Endothelial cell of umbilical vein (primary cell): ENCODE measurements at regions of chr1 and their contacts with region 1.

Region 1: DNA sequence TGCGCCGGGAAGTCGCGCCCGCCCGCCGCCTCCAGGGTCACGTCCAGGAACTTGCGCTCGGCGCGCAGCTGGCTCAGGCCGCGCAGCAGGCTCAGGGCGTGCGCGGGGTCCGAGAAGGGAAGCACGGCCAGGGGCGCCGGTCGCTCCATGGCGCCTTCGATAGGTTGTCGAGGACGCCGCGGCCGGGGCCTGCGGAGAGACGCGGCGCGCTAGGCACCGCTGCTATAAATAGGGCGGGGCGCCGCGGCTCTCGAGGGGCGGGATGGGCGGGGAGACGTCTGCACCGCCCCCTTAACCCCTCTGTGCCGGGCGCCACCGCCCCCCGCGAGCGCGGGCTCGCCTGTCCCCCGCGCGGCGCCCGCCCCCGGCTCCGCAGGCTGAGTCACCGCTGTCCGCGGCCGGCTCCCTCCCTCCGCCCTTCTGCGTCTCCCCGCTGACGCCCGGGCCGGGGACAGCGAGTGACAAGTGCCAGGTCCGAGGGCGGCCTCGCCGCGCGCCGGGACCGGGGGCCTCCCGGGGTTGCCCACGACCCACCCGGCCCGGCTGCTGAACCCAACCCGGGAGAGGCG is at the start of gene KLHL21:
- DNase-seq: peak; percentile 84
- H3K4me3 ChIP-seq: peak within 1 kb of the TSS; percentile 39 to 84 (median 74)
- H3K27ac ChIP-seq: peak within 1 kb of the TSS; percentile 86
- H3K4me1 ChIP-seq: peaks cover 23% of the 10 kb centered on the region
- H3K27me3 ChIP-seq: no peaks in the 10 kb centered on the region
- CTCF ChIP-seq: no peak
- POLR2A ChIP-seq: peak; percentile 99
- total RNA-seq, gene KLHL21: 19.2 and 22.4 TPM in 2 replicates

Region 2: DNA sequence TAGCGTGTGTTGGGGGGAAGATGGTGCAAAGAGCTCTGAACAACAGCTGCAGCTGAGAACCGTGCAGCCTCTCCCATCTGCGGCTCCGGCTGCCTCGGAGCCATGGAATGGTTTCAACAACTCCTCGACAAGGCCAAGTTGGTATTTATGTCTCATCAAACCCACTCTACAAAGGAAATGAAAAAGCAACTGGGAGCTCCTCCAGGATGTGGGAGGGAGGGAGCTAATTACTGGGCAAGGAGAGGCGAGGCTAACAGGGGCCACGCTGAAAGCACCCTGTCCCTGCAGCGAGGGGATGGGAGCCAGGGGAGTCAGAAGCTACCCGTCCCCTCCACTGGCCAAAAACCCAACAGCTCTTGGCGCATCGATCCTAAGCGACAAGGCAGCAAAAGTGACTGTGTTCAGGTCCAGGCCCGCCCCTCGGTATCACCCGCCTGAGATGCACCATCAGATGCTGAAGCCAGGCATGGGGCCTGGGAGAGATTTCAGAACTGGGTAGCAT is 272.3 kb before region 1 on chr1:
- CTCF ChIA-PET with region 1: no interaction called
- POLR2A ChIA-PET with region 1: no interaction called
- dilution Hi-C with region 1: no loop called
- intact Hi-C with region 1: no loop called
- DNase-seq: no peak
- H3K4me3 ChIP-seq: no peak overlapping the region
- H3K27ac ChIP-seq: no peak overlapping the region
- H3K4me1 ChIP-seq: no peaks in the 10 kb centered on the region
- H3K27me3 ChIP-seq: no peaks in the 10 kb centered on the region
- CTCF ChIP-seq: no peak
- POLR2A ChIP-seq: no peak

Region 3: DNA sequence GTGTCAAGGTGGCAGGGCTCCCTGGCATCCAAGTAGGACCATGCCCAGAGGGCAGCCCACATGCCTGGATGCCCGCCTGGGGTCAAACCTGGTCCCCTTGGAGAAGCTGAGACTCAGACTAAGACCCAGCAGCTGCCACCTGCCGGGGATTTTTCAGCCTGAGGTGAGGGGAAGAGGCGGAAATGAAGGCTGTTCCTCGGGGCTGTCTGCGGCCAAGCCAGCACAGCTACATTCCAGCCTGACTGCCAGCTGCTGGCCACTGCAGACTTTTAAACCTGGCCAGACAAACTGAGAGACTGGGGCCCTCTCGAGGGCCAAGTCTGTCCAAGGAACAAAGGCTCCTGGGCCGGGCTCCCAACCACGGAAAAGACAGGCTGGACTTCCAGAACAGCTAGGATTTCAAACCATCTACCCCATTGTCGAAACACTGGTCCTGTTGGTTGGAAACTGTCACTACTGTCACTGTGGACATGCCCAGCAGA is 89.4 kb before region 1 on chr1:
- CTCF ChIA-PET with region 1: no interaction called
- POLR2A ChIA-PET with region 1: no interaction called
- dilution Hi-C with region 1: no loop called
- intact Hi-C with region 1: no loop called
- DNase-seq: no peak
- H3K4me3 ChIP-seq: no peak overlapping the region
- H3K27ac ChIP-seq: no peak overlapping the region
- H3K4me1 ChIP-seq: no peaks in the 10 kb centered on the region
- H3K27me3 ChIP-seq: no peaks in the 10 kb centered on the region
- CTCF ChIP-seq: no peak
- POLR2A ChIP-seq: no peak

Region 4: DNA sequence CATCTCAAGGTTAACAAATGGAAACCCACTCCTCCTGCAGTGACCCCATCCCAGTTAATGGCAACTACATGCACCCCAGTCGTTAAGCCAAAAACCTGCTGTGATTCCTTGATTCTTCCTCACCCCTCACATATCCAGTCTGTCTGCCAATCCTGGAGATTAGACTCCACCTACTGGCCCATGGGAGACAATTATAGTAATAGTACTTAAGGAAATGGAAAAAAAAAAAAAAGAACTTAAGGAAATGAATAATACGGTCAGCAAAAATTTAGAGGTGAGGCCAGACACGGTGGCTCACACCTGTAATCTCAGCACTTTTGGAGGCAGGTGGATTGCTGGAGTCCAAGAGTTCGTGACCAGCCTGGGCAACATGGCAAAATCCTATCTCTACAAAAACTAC is 55.5 kb before region 1 on chr1:
- CTCF ChIA-PET with region 1: no interaction called
- POLR2A ChIA-PET with region 1: no interaction called
- dilution Hi-C with region 1: no loop called
- intact Hi-C with region 1: loop called (anchors 2 kb)
- DNase-seq: peak; percentile 60
- H3K4me3 ChIP-seq: no peak overlapping the region
- H3K27ac ChIP-seq: no peak overlapping the region
- H3K4me1 ChIP-seq: peaks cover 35% of the 10 kb centered on the region
- H3K27me3 ChIP-seq: no peaks in the 10 kb centered on the region
- CTCF ChIP-seq: peak; percentile 15 to 20
- POLR2A ChIP-seq: no peak

Region 5: DNA sequence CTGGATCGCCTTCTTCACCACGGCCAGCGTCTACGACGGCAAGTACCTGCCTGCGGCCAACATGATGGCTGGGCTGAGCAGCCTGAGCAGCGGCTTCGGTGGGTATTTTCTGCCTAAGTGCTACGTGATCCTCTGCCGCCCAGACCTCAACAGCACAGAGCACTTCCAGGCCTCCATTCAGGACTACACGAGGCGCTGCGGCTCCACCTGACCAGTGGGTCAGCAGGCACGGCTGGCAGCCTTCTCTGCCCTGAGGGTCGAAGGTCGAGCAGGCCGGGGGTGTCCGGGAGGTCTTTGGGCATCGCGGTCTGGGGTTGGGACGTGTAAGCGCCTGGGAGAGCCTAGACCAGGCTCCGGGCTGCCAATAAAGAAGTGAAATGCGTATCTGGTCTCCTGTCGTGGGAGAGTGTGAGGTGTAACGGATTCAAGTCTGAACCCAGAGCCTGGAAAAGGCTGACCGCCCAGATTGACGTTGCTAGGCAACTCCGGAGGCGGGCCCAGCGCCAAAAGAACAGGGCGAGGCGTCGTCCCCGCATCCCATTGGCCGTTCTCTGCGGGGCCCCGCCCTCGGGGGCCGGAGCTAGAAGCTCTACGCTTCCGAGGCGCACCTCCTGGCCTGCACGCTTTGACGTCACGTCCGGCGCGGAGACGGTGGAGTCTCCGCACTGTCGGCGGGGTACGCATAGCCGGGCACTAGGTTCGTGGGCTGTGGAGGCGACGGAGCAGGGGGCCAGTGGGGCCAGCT is 23.2 kb before region 1 on chr1 and contains the start of gene ZBTB48:
- CTCF ChIA-PET with region 1: interaction called, 11 read pairs
- POLR2A ChIA-PET with region 1: interaction called, 6 read pairs
- dilution Hi-C with region 1: no loop called
- intact Hi-C with region 1: loop called (anchors 1 kb)
- DNase-seq: peak; percentile 97
- H3K4me3 ChIP-seq: peak within 1 kb of the TSS; percentile 57 to 98 (median 65)
- H3K27ac ChIP-seq: peak within 1 kb of the TSS; percentile 57
- H3K4me1 ChIP-seq: peaks cover 14% of the 10 kb centered on the region
- H3K27me3 ChIP-seq: no peaks in the 10 kb centered on the region
- CTCF ChIP-seq: no peak
- POLR2A ChIP-seq: peak; percentile 98
- total RNA-seq, gene ZBTB48: 25.1 and 29.2 TPM in 2 replicates

Region 6: GRCh38 chr1:6624710-6625583 is 22.2 kb after region 1 on chr1 and contains the start of gene THAP3:
- CTCF ChIA-PET with region 1: interaction called, 4 read pairs
- POLR2A ChIA-PET with region 1: no interaction called
- dilution Hi-C with region 1: no loop called
- intact Hi-C with region 1: loop called (anchors 1 kb)
- DNase-seq: peak; percentile 82
- H3K4me3 ChIP-seq: peak within 1 kb of the TSS; percentile 54 to 72 (median 58)
- H3K27ac ChIP-seq: peak within 1 kb of the TSS; percentile 13
- H3K4me1 ChIP-seq: peaks cover 4% of the 10 kb centered on the region
- H3K27me3 ChIP-seq: no peaks in the 10 kb centered on the region
- CTCF ChIP-seq: no peak
- POLR2A ChIP-seq: no peak
- total RNA-seq, gene THAP3: 15.2 and 16.7 TPM in 2 replicates

Region 7: DNA sequence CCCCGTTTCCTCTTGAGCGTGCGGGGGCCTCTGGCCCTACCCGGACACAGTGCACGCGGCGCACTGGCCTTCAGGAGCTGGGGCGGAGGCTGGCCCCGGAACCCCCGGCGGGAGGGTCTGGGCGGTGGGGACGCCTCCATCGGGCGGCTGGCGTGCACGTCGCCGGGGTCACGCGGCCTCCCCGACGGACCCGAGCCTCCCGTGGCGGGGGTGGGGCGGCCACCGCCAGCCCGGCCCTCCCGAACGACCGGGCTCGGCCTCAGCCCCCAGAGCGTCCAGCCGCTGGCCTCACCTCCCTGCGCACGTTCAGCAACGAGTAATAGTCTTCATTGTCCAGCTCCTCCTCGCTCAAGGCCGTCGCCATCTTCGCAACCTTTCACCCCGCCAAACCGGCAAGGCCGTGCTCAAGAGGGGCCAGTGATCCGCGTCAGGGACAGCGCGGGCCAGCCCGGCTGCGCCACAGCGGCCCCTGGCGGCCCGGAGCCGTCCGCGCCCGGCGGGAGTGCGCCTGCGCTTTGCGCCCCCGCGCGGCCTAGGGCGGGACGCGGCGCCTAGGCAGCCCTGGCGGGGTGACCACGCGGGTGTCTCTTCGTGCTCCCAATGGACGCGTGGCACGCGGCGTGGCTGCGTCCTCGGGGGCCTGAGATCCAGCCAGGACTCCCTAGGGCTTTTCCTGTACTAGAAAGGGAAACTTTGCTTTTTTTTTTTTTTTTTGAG is 98.8 kb after region 1 on chr1 and contains the start of gene DNAJC11:
- CTCF ChIA-PET with region 1: no interaction called
- POLR2A ChIA-PET with region 1: no interaction called
- dilution Hi-C with region 1: no loop called
- intact Hi-C with region 1: loop called (anchors 5 kb)
- DNase-seq: peak; percentile 86
- H3K4me3 ChIP-seq: peak within 1 kb of the TSS; percentile 77 to 91 (median 80)
- H3K27ac ChIP-seq: peak within 1 kb of the TSS; percentile 59
- H3K4me1 ChIP-seq: peaks cover 9% of the 10 kb centered on the region
- H3K27me3 ChIP-seq: no peaks in the 10 kb centered on the region
- CTCF ChIP-seq: peak; percentile 71 to 100
- POLR2A ChIP-seq: peak; percentile 65
- total RNA-seq, gene DNAJC11: 64.3 and 65.9 TPM in 2 replicates